ENCODE measurements at regions of chr7 and their contacts with region 1.

Region 1: DNA sequence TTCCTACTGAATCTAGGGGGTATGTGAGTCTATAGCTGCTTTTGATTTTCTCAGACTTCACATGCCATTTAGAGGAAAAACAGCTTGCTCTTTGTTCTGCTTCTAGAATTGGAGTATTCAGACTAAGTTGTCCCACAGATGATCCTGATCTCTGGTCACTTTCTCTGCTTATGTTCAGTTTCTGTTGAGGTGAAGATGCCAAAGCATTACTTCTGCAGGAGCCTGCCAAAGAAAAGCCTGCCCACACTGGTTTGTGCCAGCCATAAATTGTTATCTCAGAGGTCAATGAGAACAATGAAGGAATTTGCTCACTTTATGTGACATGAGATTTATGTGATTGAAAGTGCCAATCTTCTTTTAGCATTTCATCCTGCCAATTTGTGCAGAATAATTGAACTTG is 163.6 kb downstream of the CDK14 start:
- DNase-seq: no peak
- H3K4me3 ChIP-seq: no peak overlapping the region
- H3K27ac ChIP-seq: peak overlapping the region; percentile 31
- H3K4me1 ChIP-seq: peaks cover 89% of the 10 kb centered on the region
- CTCF ChIP-seq: no peak

Region 2: DNA sequence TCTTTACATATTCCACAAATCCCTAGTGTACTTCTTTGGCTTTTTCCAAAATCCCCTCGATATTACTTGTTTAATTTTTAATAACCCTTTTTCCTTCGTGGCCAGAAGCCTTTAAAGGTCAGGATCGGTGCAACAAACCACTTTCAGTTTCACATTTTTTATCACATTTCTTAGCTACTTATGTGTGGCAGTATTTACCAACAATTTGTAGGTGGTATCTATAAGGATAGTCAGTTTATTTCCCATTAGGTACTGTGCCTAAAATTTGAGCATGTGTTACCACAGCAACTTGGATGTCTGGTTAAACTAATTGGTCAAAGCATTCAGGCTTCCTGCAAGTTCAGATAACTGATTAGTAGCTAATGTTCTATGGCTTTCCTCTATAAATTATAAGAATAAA is 58.7 kb before region 1 on chr7:
- CTCF ChIA-PET with region 1: no interaction called
- POLR2A ChIA-PET with region 1: interaction called, 12 read pairs
- intact Hi-C with region 1: no loop called
- DNase-seq: no peak
- H3K4me3 ChIP-seq: peak overlapping the region; percentile 61
- H3K27ac ChIP-seq: no peak overlapping the region
- H3K4me1 ChIP-seq: peaks cover 10% of the 10 kb centered on the region
- CTCF ChIP-seq: no peak

Region 3: DNA sequence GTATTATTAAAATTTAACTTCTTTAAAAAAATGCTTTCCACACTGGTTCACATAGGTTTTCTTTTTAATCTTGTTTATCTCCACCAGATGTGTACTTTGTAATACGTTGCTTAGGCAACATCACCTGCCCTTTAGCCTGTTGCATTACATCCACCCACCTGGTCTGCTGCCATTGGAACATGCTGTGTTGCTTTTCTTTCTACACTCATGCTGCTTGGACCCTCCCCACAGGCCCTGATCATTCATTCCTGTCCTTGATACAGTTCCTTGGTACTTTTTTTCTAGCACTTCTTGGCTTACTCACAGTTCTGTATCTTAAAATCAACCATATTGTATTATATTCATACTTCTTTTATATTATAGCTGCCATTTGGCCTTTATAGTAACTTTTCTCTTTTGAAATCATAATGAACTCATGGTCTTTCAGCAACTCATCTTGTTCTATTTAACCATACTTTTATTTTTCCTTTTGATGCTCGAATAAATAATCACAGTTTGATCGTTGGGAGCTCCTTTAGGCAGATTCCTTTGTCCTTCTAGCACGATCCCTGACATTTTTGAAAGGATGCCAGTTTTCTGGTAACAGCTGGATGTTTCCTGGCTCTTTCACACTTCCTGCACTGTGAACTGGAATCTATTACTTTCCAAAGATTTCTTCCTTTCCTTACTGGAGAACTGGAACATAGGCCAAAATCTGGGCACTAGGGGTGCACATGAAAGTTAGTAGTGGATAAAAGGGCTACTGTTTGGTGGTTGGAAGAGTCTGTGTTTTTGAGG is 38.5 kb before region 1 on chr7:
- CTCF ChIA-PET with region 1: interaction called, 6 read pairs
- POLR2A ChIA-PET with region 1: interaction called, 89 read pairs
- intact Hi-C with region 1: loop called (anchors 2 kb)
- DNase-seq: peak; percentile 67
- H3K4me3 ChIP-seq: peak overlapping the region; percentile 10
- H3K27ac ChIP-seq: peak overlapping the region; percentile 53
- H3K4me1 ChIP-seq: peaks cover 100% of the 10 kb centered on the region
- CTCF ChIP-seq: no peak

Region 4: GRCh38 chr7:90726623-90727022 is 33.1 kb before region 1 on chr7:
- CTCF ChIA-PET with region 1: no interaction called
- POLR2A ChIA-PET with region 1: interaction called, 9 read pairs
- intact Hi-C with region 1: loop called (anchors 2 kb)
- DNase-seq: no peak
- H3K4me3 ChIP-seq: peak overlapping the region; percentile 66
- H3K27ac ChIP-seq: peak overlapping the region; percentile 81
- H3K4me1 ChIP-seq: peaks cover 80% of the 10 kb centered on the region
- CTCF ChIP-seq: no peak

Region 5: GRCh38 chr7:90736968-90737939 is 22.5 kb before region 1 on chr7:
- CTCF ChIA-PET with region 1: no interaction called
- POLR2A ChIA-PET with region 1: interaction called, 12 read pairs
- intact Hi-C with region 1: no loop called
- DNase-seq: peak; percentile 88
- H3K4me3 ChIP-seq: peak overlapping the region; percentile 47
- H3K27ac ChIP-seq: peak overlapping the region; percentile 82
- H3K4me1 ChIP-seq: peaks cover 65% of the 10 kb centered on the region
- CTCF ChIP-seq: no peak

Region 6: GRCh38 chr7:90749262-90749661 is 10.4 kb before region 1 on chr7:
- CTCF ChIA-PET with region 1: interaction called, 3 read pairs
- POLR2A ChIA-PET with region 1: interaction called, 25 read pairs
- intact Hi-C with region 1: no loop called
- DNase-seq: peak; percentile 75
- H3K4me3 ChIP-seq: no peak overlapping the region
- H3K27ac ChIP-seq: peak overlapping the region; percentile 61
- H3K4me1 ChIP-seq: peaks cover 73% of the 10 kb centered on the region
- CTCF ChIP-seq: no peak

Region 7: GRCh38 chr7:90931986-90932916 is 172.5 kb after region 1 on chr7:
- CTCF ChIA-PET with region 1: no interaction called
- POLR2A ChIA-PET with region 1: interaction called, 5 read pairs
- intact Hi-C with region 1: loop called (anchors 5 kb)
- DNase-seq: peak; percentile 48
- H3K4me3 ChIP-seq: no peak overlapping the region
- H3K27ac ChIP-seq: peak overlapping the region; percentile 29
- H3K4me1 ChIP-seq: peaks cover 42% of the 10 kb centered on the region
- CTCF ChIP-seq: no peak